Aorta (tissue), 5 donors: ENCODE measurements at regions of chr3 and their contacts with region 1.

Region 1: GRCh38 chr3:74532446-74532845 is 82.0 kb downstream of the CNTN3 start:
- DNase-seq: peak in 1 of 2 donors; percentile 51
- ATAC-seq: peak; percentile 37
- H3K4me3 ChIP-seq: no peak overlapping the region
- H3K27ac ChIP-seq: peak overlapping the region in 1 of 2 donors; percentile 3
- H3K4me1 ChIP-seq: peaks cover 8 to 9% of the 10 kb centered on the region in 2 donors
- H3K27me3 ChIP-seq: no peaks in the 10 kb centered on the region

Region 2: DNA sequence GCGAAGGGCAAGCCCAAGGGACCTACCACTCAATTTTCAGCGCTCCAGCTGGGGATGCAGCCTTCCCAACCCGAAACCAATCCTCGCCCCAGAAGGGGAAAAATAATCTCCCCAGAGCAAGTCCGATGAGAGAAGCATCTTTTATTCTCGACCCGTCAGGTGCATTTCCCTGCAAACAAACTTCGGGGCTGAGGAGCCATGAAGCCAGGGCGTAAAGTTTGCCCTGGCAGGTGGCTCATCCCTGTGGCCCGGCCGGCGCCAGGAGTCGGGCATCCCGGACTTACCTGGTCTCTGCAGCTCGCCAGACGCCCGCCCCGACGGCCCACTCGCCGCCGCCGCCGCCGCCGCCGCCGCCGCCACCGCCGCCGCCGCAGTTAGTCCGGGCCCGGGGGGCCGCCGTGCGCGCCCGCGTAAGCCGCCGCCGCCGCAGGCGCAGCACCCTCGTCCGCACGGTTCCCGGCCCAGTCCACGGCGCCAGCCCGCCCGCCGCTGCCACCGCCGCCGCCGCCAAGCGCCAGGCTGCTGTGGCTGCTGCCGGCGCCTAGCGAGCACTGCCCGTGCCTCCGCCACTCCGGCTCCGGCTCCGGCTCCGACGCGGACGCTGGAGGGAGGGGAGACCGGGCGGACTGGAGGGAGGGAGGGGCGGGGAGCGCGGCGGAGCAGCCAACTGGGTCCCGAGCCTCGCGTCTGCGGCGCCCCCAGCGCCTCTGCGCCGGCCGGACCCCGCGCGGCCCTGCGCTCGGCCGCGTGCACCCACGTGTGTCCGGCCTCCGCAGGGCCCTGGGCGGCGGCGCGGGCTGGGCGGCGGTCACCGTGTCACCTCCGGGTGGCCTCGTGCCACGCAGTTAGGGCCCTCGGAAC is 81.9 kb after region 1 on chr3 and contains the start of gene CNTN3:
- intact Hi-C with region 1: loop called in 1 of 2 experiments (anchors 10 kb)
- DNase-seq: peak; percentile 47 to 79
- ATAC-seq: peak; percentile 62
- H3K4me3 ChIP-seq: peak within 1 kb of the TSS; percentile 80 to 89
- H3K27ac ChIP-seq: peak within 1 kb of the TSS in 1 of 2 donors; percentile 56
- H3K4me1 ChIP-seq: no peaks in the 10 kb centered on the region
- H3K27me3 ChIP-seq: no peaks in the 10 kb centered on the region
- total RNA-seq, gene CNTN3: 3.4 to 9.8 TPM